Activated naive CD8-positive, alpha-beta T cell treated with anti-CD3 and anti-CD28 coated beads, Interleukin-2, amount 10 ng/mL, durations not matched to agents 7 days and 5 days (primary cell): ENCODE measurements at regions of chr1 and their contacts with region 1.

Region 1: DNA sequence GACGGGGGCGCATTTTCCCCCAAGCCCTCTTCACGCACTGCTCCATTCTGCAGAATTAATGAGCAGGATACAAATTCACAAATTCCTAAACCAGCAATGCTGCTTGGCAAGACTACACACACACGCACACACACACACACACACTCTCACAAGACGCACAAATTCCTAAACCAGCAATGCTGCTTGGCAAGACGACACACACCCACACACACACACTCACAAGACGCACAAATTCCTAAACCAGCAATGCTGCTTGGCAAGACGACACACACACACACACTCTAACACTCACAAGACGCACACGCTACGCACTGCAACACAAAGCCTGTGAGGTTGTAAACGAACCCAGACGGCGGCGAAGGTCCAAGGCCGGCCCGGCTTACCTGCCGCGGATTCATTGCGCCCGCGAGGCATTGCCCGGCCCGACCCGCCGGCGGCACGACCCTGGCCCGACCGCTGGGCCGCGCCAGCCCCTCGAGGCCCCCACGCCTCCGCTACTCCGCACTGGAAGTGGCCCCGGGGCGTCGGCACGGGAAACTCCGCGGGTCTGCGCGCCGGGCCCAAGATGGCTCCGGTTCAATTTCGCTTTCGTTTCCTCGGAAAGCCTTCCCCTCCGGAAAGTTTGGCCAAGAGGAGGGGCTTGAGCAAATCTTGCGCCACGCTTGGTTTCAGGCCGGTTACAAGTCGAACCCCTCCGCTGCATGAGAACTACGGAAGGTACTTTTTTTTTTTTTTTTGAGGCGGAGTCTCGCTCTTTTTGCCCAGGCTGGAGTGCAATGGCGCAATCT is at the start of gene ADAR:
- DNase-seq: peak; percentile 85
- ATAC-seq: peak; percentile 81
- H3K4me3 Mint-ChIP-seq: peak within 1 kb of the TSS; percentile 98
- H3K27ac Mint-ChIP-seq: peak within 1 kb of the TSS; percentile 100
- H3K4me1 Mint-ChIP-seq: peaks cover 63% of the 10 kb centered on the region
- H3K27me3 Mint-ChIP-seq: no peaks in the 10 kb centered on the region
- total RNA-seq, gene ADAR: 325 to 338 TPM

Region 2: GRCh38 chr1:154097873-154098272 is 509.9 kb before region 1 on chr1:
- POLR2A ChIA-PET with region 1: no interaction called
- DNase-seq: no peak
- ATAC-seq: no peak
- H3K4me3 Mint-ChIP-seq: no peak overlapping the region
- H3K27ac Mint-ChIP-seq: no peak overlapping the region
- H3K4me1 Mint-ChIP-seq: no peaks in the 10 kb centered on the region
- H3K27me3 Mint-ChIP-seq: no peaks in the 10 kb centered on the region

Region 3: GRCh38 chr1:154619181-154619948 is 11.6 kb after region 1 on chr1:
- POLR2A ChIA-PET with region 1: interaction called, 89 read pairs
- DNase-seq: no peak
- ATAC-seq: no peak
- H3K4me3 Mint-ChIP-seq: no peak overlapping the region
- H3K27ac Mint-ChIP-seq: no peak overlapping the region
- H3K4me1 Mint-ChIP-seq: peaks cover 50% of the 10 kb centered on the region
- H3K27me3 Mint-ChIP-seq: no peaks in the 10 kb centered on the region

Region 4: DNA sequence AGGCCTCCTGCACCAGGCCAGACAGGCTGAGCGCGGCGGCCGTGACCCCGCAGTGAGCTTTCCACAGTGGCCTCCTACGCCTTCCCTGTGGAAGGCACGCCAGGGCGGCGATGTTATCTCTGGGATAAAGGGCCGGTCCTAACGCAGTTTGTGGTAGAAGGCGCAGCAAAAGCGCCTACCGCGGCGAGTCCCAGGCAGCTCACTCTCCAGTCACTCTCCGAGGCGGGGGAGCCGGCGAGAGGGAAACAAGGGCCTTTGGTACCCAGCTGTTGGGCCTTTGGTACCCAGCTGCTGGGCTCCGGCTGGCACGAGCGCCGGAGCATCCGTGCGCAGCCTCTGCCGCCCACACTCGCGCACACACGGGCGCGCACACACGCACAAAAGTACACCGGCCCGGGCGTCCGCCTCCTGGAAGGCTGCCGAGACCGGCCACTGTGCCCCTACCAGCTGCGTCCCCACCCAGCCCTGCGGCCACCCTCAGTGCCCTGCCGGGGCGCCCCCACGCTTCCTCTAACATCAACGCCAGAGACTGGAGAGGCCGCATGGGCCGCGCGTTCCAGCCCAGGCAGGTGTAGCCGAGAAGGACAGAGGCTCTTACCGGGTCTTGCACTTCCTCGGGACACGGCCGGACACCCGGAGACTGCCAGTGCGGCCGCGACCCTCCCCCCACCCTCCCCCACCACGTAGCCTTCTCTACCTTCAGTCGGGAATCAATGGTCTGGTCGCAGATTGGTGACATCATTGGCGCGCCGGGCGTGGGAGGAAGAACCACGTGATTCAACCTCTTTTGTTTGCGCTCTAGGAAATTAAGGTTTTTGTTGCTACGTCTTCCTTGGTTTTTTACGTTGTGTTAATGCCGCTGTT is 19.7 kb after region 1 on chr1:
- POLR2A ChIA-PET with region 1: interaction called, 89 read pairs
- DNase-seq: peak; percentile 88
- ATAC-seq: peak; percentile 67
- H3K4me3 Mint-ChIP-seq: peak overlapping the region; percentile 97
- H3K27ac Mint-ChIP-seq: peak overlapping the region; percentile 98
- H3K4me1 Mint-ChIP-seq: peaks cover 27% of the 10 kb centered on the region
- H3K27me3 Mint-ChIP-seq: peaks cover 15% of the 10 kb centered on the region